H1 (cell line): ENCODE measurements at regions of chr18 and their contacts with region 1.

Region 1: GRCh38 chr18:46793565-46793964 is 36.7 kb upstream of the ST8SIA5 start:
- DNase-seq: no peak
- H3K4me3 ChIP-seq: no peak overlapping the region
- H3K27ac ChIP-seq: no peak overlapping the region
- H3K4me1 ChIP-seq: no peaks in the 10 kb centered on the region; a peak in 1 of 7 replicates
- H3K27me3 ChIP-seq: no peaks in the 10 kb centered on the region
- CTCF ChIP-seq: peak; percentile 22 to 58 (median 29); a peak in 3 of 4 replicates
- EP300 ChIP-seq: no peak
- POLR2A ChIP-seq: no peak
- RAD21 ChIP-seq: peak; percentile 25 to 43; a peak in 2 of 4 replicates

Region 2: GRCh38 chr18:46809145-46809544 is 15.6 kb after region 1 on chr18:
- CTCF ChIA-PET with region 1: interaction called, 11 read pairs
- POLR2A ChIA-PET with region 1: interaction called, 12 read pairs
- DNase-seq: no peak
- H3K4me3 ChIP-seq: no peak overlapping the region
- H3K27ac ChIP-seq: no peak overlapping the region
- H3K4me1 ChIP-seq: peaks cover 0 to 5% (median under 1%) of the 10 kb centered on the region in 4 experiments; a peak in 1 of 7 replicates
- H3K27me3 ChIP-seq: no peaks in the 10 kb centered on the region
- CTCF ChIP-seq: no peak
- EP300 ChIP-seq: no peak
- POLR2A ChIP-seq: no peak
- RAD21 ChIP-seq: no peak

Region 3: GRCh38 chr18:46814399-46814798 is 20.8 kb after region 1 on chr18:
- CTCF ChIA-PET with region 1: interaction called, 11 read pairs
- POLR2A ChIA-PET with region 1: interaction called, 3 read pairs
- DNase-seq: no peak
- H3K4me3 ChIP-seq: no peak overlapping the region
- H3K27ac ChIP-seq: no peak overlapping the region
- H3K4me1 ChIP-seq: peaks cover 0 to 5% (median under 1%) of the 10 kb centered on the region in 4 experiments; a peak in 1 of 7 replicates
- H3K27me3 ChIP-seq: no peaks in the 10 kb centered on the region
- CTCF ChIP-seq: no peak
- EP300 ChIP-seq: no peak
- POLR2A ChIP-seq: no peak
- RAD21 ChIP-seq: no peak